ENCODE measurements at regions of chr9 and their contacts with region 1.

Region 1: DNA sequence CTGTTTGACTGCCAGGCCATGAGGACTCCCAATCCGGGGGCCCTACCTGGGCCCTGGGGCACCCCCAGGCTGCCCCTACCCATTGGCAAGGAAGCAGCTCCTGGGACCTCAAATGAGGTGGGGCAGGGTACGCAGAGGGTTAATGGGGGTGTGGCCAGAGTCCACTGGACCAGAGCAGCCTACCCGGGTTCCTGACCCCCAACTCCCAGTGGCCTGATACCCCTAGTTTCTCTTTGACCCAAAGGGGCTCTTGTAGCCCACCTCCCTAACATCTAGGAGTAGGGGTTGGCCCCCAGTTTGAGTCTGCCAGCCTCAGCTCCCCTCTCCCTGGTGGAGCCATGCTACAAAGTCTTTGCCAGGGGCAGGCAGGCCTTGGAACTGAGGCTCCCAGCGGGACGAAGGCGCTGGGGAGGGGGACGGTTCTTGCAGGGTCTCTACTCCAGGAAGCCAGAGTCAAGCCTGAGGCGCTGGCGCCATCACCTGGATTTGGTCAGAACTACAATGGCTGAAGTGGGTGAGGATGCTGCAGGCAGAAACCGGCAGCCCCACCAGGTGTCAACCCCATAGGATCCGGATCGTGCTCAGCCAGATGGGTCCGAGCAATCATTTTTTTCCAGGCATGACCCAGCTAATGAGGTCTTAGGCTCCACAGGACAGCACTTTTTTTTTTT is 8.4 kb upstream of the CERCAM start:
- DNase-seq: peak in 1 of 4 donors; percentile 67
- ATAC-seq: peak; percentile 58
- H3K4me3 ChIP-seq: no peak overlapping the region
- H3K27ac ChIP-seq: no peak overlapping the region
- H3K4me1 ChIP-seq: no peaks in the 10 kb centered on the region
- H3K27me3 ChIP-seq: peaks cover 0 to 92% of the 10 kb centered on the region in 2 donors
- CTCF ChIP-seq: peak; percentile 32 to 43

Region 2: DNA sequence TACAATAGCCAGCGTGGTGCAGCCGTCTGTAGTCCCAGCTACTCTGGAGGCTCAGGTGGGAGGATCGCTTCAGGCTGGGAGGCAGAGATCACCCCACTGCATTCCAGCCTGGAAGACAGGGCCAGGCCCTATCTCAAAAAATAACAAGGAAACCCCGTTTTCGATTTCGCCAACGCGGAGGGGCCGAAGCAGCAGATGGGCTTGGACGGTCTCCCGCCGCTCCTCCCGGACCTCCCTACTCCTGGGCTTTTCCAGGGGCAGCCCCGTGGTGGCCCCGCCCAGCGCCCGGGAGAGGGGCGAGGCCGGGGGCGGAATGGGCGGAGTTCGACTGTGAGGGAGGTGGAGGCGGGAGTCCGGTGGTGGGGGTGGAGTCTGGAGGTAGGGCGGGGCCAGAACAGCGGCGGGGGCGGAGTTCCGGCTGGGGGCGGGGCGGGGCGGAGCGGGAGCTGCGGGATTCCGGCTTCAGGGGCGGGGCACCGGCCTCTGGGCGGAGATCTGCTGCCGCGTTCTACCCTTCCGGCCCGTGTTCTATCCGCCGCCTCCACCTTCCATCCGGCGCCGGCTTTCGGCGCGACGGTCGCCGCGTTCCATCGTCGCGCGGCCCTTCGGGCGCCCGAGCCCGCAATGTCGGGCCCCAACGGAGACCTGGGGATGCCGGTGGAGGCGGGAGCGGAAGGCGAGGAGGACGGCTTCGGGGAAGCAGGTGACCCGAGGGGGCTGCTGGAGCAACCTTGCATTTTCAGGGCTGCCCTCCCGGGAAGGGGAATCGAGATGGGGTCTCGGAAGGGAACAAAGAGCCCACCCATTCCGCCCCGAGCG is 252.3 kb before region 1 on chr9 and contains the start of gene BBLN:
- intact Hi-C with region 1: no loop called
- DNase-seq: peak; percentile 90 to 98 (median 97)
- ATAC-seq: peak; percentile 97
- H3K4me3 ChIP-seq: peak within 1 kb of the TSS; percentile 71 to 88
- H3K27ac ChIP-seq: peak within 1 kb of the TSS; percentile 70 to 78
- H3K4me1 ChIP-seq: peaks cover 0 to 23% of the 10 kb centered on the region in 2 donors
- H3K27me3 ChIP-seq: no peaks in the 10 kb centered on the region
- CTCF ChIP-seq: no peak
- polyA plus RNA-seq, gene BBLN: 27.1 to 44.3 (median 36.3) TPM

Region 3: DNA sequence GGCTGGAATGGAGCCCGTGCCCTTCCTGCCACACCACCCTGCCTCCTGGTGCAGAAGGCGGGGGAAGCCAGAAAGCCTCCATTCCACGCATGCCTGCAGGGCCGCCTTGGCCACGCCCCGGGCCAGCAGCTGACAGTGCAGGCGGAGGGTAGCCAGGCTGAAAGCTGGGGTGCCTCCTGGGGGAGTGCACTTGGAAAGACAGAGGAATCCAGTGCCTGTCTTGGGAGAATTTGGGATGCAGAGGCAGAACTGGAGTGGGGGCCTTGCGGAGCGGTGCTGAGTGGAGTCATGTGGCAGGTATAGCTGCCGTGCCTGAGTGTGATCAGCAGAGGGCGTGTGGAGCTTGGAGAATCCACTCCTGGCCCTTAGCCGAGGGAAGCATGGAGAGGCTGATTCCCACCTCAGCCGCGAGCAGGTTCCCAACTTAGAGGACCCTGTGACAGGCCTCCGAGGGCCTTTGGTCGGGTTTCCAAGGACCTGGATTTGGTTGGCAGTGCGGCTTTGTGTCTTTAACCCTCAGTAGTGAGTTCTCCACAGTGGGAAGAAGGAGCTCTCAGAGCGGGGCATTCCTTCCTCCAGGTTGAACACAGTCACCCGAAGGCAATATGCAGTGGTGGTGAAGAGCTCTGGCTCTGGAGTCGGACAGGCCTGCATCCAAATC is 50.1 kb before region 1 on chr9:
- intact Hi-C with region 1: loop called in 1 of 2 experiments (anchors 10 kb)
- DNase-seq: peak; percentile 72 to 90 (median 84)
- ATAC-seq: peak; percentile 96
- H3K4me3 ChIP-seq: peak overlapping the region; percentile 27 to 38
- H3K27ac ChIP-seq: peak overlapping the region in 1 of 2 donors; percentile 56
- H3K4me1 ChIP-seq: peaks cover 18 to 26% of the 10 kb centered on the region in 2 donors
- H3K27me3 ChIP-seq: no peaks in the 10 kb centered on the region
- CTCF ChIP-seq: peak; percentile 84 to 86

Measured in left lung (tissue), 14 donors.